ENCODE measurements at regions of chr17 and their contacts with region 1.

Region 1: GRCh38 chr17:10705727-10706126 is 8.3 kb downstream of the ADPRM start:
- DNase-seq: no peak
- H3K4me3 ChIP-seq: no peak overlapping the region
- H3K27ac ChIP-seq: no peak overlapping the region
- H3K4me1 ChIP-seq: no peaks in the 10 kb centered on the region
- H3K27me3 ChIP-seq: no peaks in the 10 kb centered on the region
- CTCF ChIP-seq: no peak
- POLR2A ChIP-seq: no peak

Region 2: DNA sequence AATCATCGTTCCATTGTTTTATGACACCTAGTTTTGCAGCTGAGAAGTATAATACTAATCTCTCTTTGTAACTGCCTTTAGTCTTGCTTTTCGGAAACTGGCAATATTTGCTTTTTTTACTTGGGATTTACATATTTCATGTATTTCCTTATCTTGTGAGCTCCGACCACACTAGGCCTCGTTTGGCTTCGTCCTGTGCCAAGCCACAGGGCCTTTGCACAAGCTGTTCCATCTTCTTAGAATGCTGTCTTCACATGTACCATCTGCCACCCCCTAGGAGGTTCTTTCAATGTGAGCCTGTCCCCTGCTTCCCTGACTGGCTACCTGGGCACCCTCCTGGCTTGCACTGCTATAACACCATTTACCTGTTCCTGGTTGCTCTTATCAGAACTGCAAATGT is 612.5 kb after region 1 on chr17:
- intact Hi-C with region 1: loop called (anchors 5 kb)
- DNase-seq: no peak
- H3K4me3 ChIP-seq: no peak overlapping the region
- H3K27ac ChIP-seq: no peak overlapping the region
- H3K4me1 ChIP-seq: no peaks in the 10 kb centered on the region
- H3K27me3 ChIP-seq: no peaks in the 10 kb centered on the region
- CTCF ChIP-seq: no peak
- POLR2A ChIP-seq: no peak